ENCODE measurements at regions of chr20 and their contacts with region 1.

Region 1: DNA sequence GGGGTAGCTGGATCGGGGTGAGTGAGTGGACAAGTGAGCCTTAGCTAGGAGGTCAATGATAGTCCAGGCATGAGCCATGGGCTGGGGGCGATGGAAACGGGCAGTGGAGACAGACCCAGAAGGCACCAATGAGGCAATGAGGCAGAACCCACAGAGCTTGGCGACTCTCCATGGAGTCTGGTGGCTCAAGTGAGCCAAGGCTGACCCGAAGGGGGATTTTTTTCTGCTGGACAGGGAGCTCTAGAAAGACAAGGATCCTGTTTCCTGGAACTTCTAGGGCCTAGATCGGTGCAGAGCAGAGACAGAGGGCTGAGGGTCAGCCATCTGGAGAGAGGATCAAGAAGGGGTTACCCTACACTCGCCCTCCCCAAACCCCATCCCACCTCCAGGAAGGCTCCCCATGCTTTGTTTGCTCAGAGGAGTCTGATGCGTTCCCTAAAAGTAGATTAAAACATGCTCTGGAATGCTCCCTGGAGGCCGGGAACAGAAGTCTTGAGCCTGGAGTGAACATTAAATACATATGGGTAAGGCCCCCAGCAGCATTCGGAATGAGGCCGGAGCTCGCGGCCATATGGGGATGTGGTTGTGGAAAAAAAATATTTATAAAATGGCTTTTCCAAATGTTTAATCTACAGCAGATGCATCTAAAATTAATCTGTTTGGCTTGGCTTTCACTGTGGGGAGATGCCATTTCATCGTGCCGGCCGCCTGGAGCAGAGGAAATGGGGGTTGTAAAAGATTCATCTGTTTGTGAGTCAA is 237.8 kb upstream of the PMEPA1 start:
- DNase-seq: no peak
- H3K4me3 ChIP-seq: no peak overlapping the region
- H3K27ac ChIP-seq: no peak overlapping the region
- H3K4me1 ChIP-seq: no peaks in the 10 kb centered on the region
- H3K27me3 ChIP-seq: no peaks in the 10 kb centered on the region
- CTCF ChIP-seq: no peak

Region 2: GRCh38 chr20:57893366-57893999 is 54.1 kb before region 1 on chr20:
- CTCF ChIA-PET with region 1: no interaction called
- dilution Hi-C with region 1: loop called (anchors 5 kb)
- in situ Hi-C with region 1: no loop called
- intact Hi-C with region 1: no loop called
- DNase-seq: no peak
- H3K4me3 ChIP-seq: no peak overlapping the region
- H3K27ac ChIP-seq: no peak overlapping the region
- H3K4me1 ChIP-seq: no peaks in the 10 kb centered on the region
- H3K27me3 ChIP-seq: peaks cover 5% of the 10 kb centered on the region
- CTCF ChIP-seq: no peak

Measured in mammary epithelial cell (primary cell).